ENCODE measurements at regions of chr22 and their contacts with region 1.

Region 1: DNA sequence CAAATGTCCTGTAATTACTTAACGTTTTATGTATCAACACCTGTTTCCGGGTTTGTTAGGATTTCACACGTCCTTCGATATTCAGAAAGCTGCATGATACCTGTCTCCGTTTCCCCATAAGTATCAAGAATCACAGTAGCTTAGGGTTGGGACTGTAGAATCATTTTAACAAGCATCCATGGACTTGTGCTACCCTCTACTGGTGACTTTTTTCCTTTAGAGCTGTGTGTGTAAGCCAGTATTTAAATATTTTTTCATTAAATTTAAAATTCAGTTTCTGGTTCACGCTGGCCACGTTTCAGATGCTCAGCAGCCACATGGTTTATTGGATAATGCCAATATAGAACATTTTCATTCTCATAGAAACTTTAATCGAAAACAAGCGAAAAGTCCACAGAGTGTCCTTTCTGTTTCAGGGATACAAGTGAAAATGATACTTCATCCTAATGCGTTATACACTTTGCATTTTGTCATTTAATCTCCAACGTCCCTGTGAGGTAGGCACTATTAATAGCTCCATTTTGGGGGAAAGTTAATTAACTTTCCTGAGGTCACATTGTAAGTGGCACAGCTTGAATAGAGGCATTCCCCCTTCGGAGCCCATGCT is 61.5 kb upstream of the SLC25A18 start:
- DNase-seq: peak; percentile 19
- H3K4me3 ChIP-seq: no peak overlapping the region
- CTCF ChIP-seq: peak; percentile 30

Region 2: GRCh38 chr22:16917144-16918003 is 584.4 kb before region 1 on chr22:
- CTCF ChIA-PET with region 1: interaction called, 34 read pairs
- POLR2A ChIA-PET with region 1: no interaction called
- DNase-seq: no peak
- H3K4me3 ChIP-seq: no peak overlapping the region
- CTCF ChIP-seq: peak; percentile 38

Region 3: GRCh38 chr22:17077255-17077654 is 424.5 kb before region 1 on chr22:
- CTCF ChIA-PET with region 1: interaction called, 145 read pairs
- POLR2A ChIA-PET with region 1: interaction called, 3 read pairs
- DNase-seq: peak; percentile 49
- H3K4me3 ChIP-seq: no peak overlapping the region
- CTCF ChIP-seq: no peak

Region 4: GRCh38 chr22:17514084-17514483 is 12.3 kb after region 1 on chr22:
- CTCF ChIA-PET with region 1: interaction called, 14 read pairs
- POLR2A ChIA-PET with region 1: no interaction called
- DNase-seq: no peak
- H3K4me3 ChIP-seq: no peak overlapping the region
- CTCF ChIP-seq: no peak

Region 5: GRCh38 chr22:17606496-17606895 is 104.7 kb after region 1 on chr22:
- CTCF ChIA-PET with region 1: no interaction called
- POLR2A ChIA-PET with region 1: no interaction called
- DNase-seq: peak; percentile 36
- H3K4me3 ChIP-seq: no peak overlapping the region
- CTCF ChIP-seq: no peak

Region 6: DNA sequence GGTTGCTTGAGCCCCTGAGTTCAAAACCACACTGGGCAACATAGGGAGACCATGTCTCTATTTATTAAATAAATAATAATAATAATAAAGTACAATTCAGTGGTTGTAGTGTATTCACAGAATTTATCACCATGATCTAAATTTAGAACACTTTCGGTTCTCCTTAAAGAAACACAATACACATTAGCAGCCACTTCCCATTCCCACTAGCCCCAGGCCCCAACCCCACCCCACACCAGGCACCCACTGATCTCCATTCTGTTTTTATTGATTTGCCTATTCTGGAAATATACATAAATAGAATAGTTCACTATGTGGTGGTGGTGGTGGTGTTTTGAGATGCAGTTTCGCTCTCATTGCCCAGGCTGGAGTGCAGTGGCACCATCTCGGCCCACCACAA is 182.5 kb after region 1 on chr22:
- CTCF ChIA-PET with region 1: no interaction called
- POLR2A ChIA-PET with region 1: no interaction called
- DNase-seq: no peak
- H3K4me3 ChIP-seq: no peak overlapping the region
- CTCF ChIP-seq: no peak

Measured in AG04449 (cell line).